HEK293 (cell line): ENCODE measurements at regions of chr17 and their contacts with region 1.

Region 1: GRCh38 chr17:43006639-43007551 is at the start of gene IFI35:
- H3K4me3 ChIP-seq: peak within 1 kb of the TSS; percentile 39
- H3K27ac ChIP-seq: peak within 1 kb of the TSS; percentile 39; the same call in 1 of the 2 replicates
- H3K4me1 ChIP-seq: no peaks in the 10 kb centered on the region
- CTCF ChIP-seq: peak; percentile 76

Region 2: GRCh38 chr17:43024407-43025289 is 17.8 kb after region 1 on chr17 and contains the start of gene RND2:
- CTCF ChIA-PET with region 1: interaction called, 5 read pairs
- POLR2A ChIA-PET with region 1: interaction called, 14 read pairs
- H3K4me3 ChIP-seq: peak within 1 kb of the TSS; percentile 52
- H3K27ac ChIP-seq: peak within 1 kb of the TSS; percentile 62
- H3K4me1 ChIP-seq: peaks cover 2% of the 10 kb centered on the region
- CTCF ChIP-seq: peak; percentile 97